ENCODE measurements at regions of chr2 and their contacts with region 1.

Region 1: GRCh38 chr2:70948337-70949003 is 12.8 kb downstream of the ATP6V1B1 start:
- DNase-seq: peak; percentile 47 to 48
- ATAC-seq: peak; percentile 94 to 96
- H3K4me3 ChIP-seq: peak overlapping the region; percentile 32 to 51 (median 46)
- H3K27ac ChIP-seq: no peak overlapping the region
- H3K4me1 ChIP-seq: peaks cover 0 to 4% of the 10 kb centered on the region in 2 donors
- H3K27me3 ChIP-seq: peaks cover 0 to 6% (median 0%) of the 10 kb centered on the region in 3 donors
- CTCF ChIP-seq: peak; percentile 59 to 90 (median 76)
- POLR2A ChIP-seq: no peak

Region 2: GRCh38 chr2:70789304-70790135 is 158.9 kb before region 1 on chr2:
- in situ Hi-C with region 1: loop called in 1 of 4 experiments (anchors 25 kb)
- intact Hi-C with region 1: no loop called
- DNase-seq: peak in 1 of 2 donors; percentile 10
- ATAC-seq: peak in 1 of 2 donors; percentile 45
- H3K4me3 ChIP-seq: peak overlapping the region; percentile 34 to 49 (median 39)
- H3K27ac ChIP-seq: no peak overlapping the region
- H3K4me1 ChIP-seq: peaks cover 5 to 6% of the 10 kb centered on the region in 2 donors
- H3K27me3 ChIP-seq: peaks cover 30 to 53% (median 32%) of the 10 kb centered on the region in 3 donors
- CTCF ChIP-seq: peak in 4 of 5 experiments; percentile 14 to 62 (median 31)
- POLR2A ChIP-seq: no peak

Region 3: GRCh38 chr2:70861777-70862625 is 86.5 kb before region 1 on chr2:
- in situ Hi-C with region 1: loop called in 3 of 4 experiments (anchors 10 kb)
- intact Hi-C with region 1: loop called (anchors 1 kb)
- DNase-seq: peak; percentile 46 to 61
- ATAC-seq: peak; percentile 91 to 94
- H3K4me3 ChIP-seq: peak overlapping the region in 2 of 4 donors; percentile 3 to 4
- H3K27ac ChIP-seq: no peak overlapping the region
- H3K4me1 ChIP-seq: peaks cover 10 to 12% of the 10 kb centered on the region in 2 donors
- H3K27me3 ChIP-seq: peaks cover 0 to 16% (median 7%) of the 10 kb centered on the region in 3 donors
- CTCF ChIP-seq: peak; percentile 79 to 97 (median 86)
- POLR2A ChIP-seq: no peak

Region 4: GRCh38 chr2:70871398-70872211 is 76.9 kb before region 1 on chr2:
- in situ Hi-C with region 1: loop called in 3 of 4 experiments (anchors 10 kb)
- intact Hi-C with region 1: loop called (anchors 1 kb)
- DNase-seq: peak; percentile 64 to 66
- ATAC-seq: peak; percentile 88 to 90
- H3K4me3 ChIP-seq: peak overlapping the region; percentile 24 to 54 (median 38)
- H3K27ac ChIP-seq: no peak overlapping the region
- H3K4me1 ChIP-seq: peaks cover 7 to 8% of the 10 kb centered on the region in 2 donors
- H3K27me3 ChIP-seq: peaks cover 12 to 30% (median 19%) of the 10 kb centered on the region in 3 donors
- CTCF ChIP-seq: peak; percentile 70 to 98 (median 93)
- POLR2A ChIP-seq: no peak

Region 5: GRCh38 chr2:70977605-70978205 is 29.2 kb after region 1 on chr2:
- in situ Hi-C with region 1: no loop called
- intact Hi-C with region 1: loop called (anchors 2 kb)
- DNase-seq: peak in 1 of 2 donors; percentile 34
- ATAC-seq: peak; percentile 42 to 51
- H3K4me3 ChIP-seq: peak overlapping the region; percentile 53 to 73 (median 66)
- H3K27ac ChIP-seq: peak overlapping the region; percentile 64 to 81 (median 68)
- H3K4me1 ChIP-seq: peaks cover 4 to 11% of the 10 kb centered on the region in 2 donors
- H3K27me3 ChIP-seq: peaks cover 0 to 6% (median 0%) of the 10 kb centered on the region in 3 donors
- CTCF ChIP-seq: no peak
- POLR2A ChIP-seq: no peak

Measured in gastrocnemius medialis (tissue), 4 donors.